Activated CD4-positive, alpha-beta T cell treated with anti-CD3 and anti-CD28 coated beads for 36 hours (primary cell): ENCODE measurements at regions of chr16 and their contacts with region 1.

Region 1: GRCh38 chr16:84277237-84277823 is 17.3 kb upstream of the WFDC1 start:
- DNase-seq: peak; percentile 86
- ATAC-seq: peak; percentile 73
- H3K4me3 Mint-ChIP-seq: no peak overlapping the region
- H3K27ac Mint-ChIP-seq: no peak overlapping the region
- H3K4me1 Mint-ChIP-seq: no peaks in the 10 kb centered on the region
- H3K27me3 Mint-ChIP-seq: peaks cover 2% of the 10 kb centered on the region

Region 2: GRCh38 chr16:84308120-84308519 is 30.8 kb after region 1 on chr16:
- CTCF ChIA-PET with region 1: interaction called, 7 read pairs
- POLR2A ChIA-PET with region 1: no interaction called
- intact Hi-C with region 1: loop called in 1 of 2 experiments (anchors 1 kb)
- DNase-seq: peak; percentile 48
- ATAC-seq: no peak
- H3K4me3 Mint-ChIP-seq: no peak overlapping the region
- H3K27ac Mint-ChIP-seq: no peak overlapping the region
- H3K4me1 Mint-ChIP-seq: no peaks in the 10 kb centered on the region
- H3K27me3 Mint-ChIP-seq: peaks cover 9% of the 10 kb centered on the region

Region 3: DNA sequence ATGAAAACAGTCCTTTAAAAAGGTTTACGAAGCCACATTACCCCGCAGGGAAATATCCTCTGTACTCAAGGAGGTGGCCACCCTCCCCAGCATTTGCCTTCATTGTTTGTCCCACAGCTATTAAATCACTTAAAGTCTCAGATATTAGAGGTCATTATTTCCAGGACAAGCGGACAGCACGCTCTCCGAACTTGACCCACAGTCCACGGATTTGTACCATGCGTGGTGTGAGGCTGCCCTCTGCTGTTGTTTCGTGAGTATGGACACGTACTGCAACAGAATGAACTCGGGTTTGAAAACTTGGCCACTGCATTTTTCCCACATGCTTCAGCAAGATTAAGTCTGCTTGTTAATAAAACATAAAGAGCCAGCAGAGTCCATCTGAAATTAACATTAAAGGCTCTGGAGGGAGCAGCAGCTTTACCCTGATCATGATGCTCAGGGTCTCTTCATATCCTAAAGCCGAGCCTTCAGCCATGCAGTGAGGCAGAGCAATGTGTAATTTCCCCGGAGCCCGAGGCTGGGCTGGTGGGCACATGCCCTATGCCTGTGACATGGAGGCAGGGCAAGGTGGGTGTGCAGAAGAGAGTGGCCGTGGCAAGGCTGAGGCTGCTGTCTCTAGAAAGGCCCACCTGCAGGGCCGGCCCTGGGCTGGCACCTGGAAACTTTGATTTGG is 207.4 kb after region 1 on chr16:
- CTCF ChIA-PET with region 1: interaction called, 9 read pairs
- POLR2A ChIA-PET with region 1: no interaction called
- intact Hi-C with region 1: loop called (anchors 1 kb)
- DNase-seq: peak; percentile 53
- ATAC-seq: peak; percentile 44
- H3K4me3 Mint-ChIP-seq: no peak overlapping the region
- H3K27ac Mint-ChIP-seq: no peak overlapping the region
- H3K4me1 Mint-ChIP-seq: no peaks in the 10 kb centered on the region
- H3K27me3 Mint-ChIP-seq: no peaks in the 10 kb centered on the region

Region 4: DNA sequence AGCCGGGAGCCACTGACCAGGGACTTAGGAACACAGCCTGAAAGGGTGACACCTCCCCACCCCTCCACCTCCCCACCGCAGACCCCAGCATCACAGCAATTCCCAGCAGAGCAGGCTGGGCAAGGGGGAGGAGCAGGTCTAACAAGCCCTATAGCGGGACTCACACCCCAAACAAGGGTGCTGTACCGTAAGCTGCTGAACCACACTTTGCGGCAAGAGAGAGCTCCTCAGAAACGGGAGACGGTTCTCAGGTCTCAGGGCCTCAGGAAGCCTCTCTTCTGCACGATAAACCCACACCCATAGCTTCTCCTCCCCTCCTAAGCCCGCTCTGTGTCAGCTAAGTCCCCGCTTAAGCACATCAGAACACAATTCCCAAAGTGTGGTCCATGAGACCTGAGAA is 352.2 kb after region 1 on chr16:
- CTCF ChIA-PET with region 1: no interaction called
- POLR2A ChIA-PET with region 1: no interaction called
- intact Hi-C with region 1: loop called (anchors 5 to 10 kb)
- DNase-seq: no peak
- ATAC-seq: peak; percentile 36
- H3K4me3 Mint-ChIP-seq: no peak overlapping the region
- H3K27ac Mint-ChIP-seq: no peak overlapping the region
- H3K4me1 Mint-ChIP-seq: peaks cover 28% of the 10 kb centered on the region
- H3K27me3 Mint-ChIP-seq: peaks cover 1% of the 10 kb centered on the region